ENCODE measurements at regions of chr5 and their contacts with region 1.

Region 1: GRCh38 chr5:122076664-122077365 is 1.2 kb downstream of the LOX start:
- DNase-seq: peak; percentile 76
- ATAC-seq: peak; percentile 56
- H3K4me3 ChIP-seq: peak overlapping the region; percentile 83
- H3K27ac ChIP-seq: peak overlapping the region; percentile 89
- H3K4me1 ChIP-seq: peaks cover 13% of the 10 kb centered on the region
- H3K27me3 ChIP-seq: no peaks in the 10 kb centered on the region
- CTCF ChIP-seq: peak; percentile 77
- POLR2A ChIP-seq: peak; percentile 43; the same call in 1 of the 2 replicates
- RAD21 ChIP-seq: peak; percentile 63

Region 2: DNA sequence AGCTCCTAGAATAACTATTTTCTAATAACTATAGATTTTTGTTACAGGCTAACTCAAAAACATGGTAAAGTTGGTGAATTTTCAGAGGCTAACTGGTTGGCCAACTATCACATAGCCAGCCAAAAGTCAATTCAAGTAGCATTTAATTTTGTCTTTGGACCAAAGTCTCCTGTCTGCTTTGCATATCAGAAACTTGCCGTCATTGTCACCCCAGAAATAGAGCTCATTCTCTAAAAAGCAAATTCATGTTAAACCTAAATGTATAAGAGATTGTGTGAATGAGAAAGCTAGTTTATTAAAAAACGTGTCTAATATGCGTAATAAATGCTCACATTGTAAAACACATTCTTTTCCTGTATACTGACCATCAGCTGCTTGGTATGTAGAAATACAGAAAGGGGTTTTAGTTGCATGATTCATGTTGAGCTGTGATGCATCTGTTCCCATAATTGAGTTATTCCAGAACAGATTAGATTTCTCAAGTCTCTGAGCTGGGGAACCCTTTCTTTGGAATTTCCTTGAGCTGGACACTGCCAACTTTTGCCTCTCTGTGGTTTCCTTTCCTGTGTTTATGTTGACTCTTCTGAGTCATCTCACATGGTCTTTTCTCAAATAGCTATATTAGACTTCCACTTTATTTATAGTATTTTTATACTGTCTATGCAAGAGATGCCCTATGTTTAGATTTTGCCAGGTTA is 107.8 kb before region 1 on chr5:
- CTCF ChIA-PET with region 1: interaction called, 16 read pairs
- POLR2A ChIA-PET with region 1: interaction called, 3 read pairs
- dilution Hi-C with region 1: no loop called
- in situ Hi-C with region 1: loop called (anchors 10 kb)
- intact Hi-C with region 1: loop called (anchors 1 kb)
- DNase-seq: peak; percentile 100
- ATAC-seq: peak; percentile 94
- H3K4me3 ChIP-seq: no peak overlapping the region
- H3K27ac ChIP-seq: peak overlapping the region; percentile 39; the same call in 1 of the 2 replicates
- H3K4me1 ChIP-seq: peaks cover 6% of the 10 kb centered on the region
- H3K27me3 ChIP-seq: no peaks in the 10 kb centered on the region
- CTCF ChIP-seq: no peak
- POLR2A ChIP-seq: no peak
- RAD21 ChIP-seq: no peak; the same call in 1 of the 2 replicates

Region 3: DNA sequence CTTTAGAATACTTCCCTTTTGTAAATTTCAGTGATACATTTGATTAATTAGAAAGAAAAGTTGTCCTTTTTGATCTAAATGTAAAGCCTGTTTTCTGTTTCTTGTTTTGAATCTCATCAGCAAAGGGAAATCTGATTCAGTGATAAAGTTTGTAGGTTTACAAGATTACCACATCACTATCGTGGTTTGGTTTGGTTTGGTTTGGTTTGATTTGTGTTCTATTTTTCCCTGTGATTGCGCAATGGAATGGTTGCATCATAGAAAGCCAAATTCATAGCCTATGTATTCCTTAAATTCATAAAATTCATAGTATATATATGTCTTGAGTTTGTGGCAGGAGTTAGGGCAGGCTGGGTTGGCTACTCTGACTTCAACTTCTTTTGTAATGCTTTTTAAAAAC is 99.8 kb before region 1 on chr5:
- CTCF ChIA-PET with region 1: no interaction called
- POLR2A ChIA-PET with region 1: interaction called, 3 read pairs
- dilution Hi-C with region 1: no loop called
- in situ Hi-C with region 1: loop called (anchors 10 kb)
- intact Hi-C with region 1: no loop called
- DNase-seq: peak; percentile 64
- ATAC-seq: no peak
- H3K4me3 ChIP-seq: no peak overlapping the region
- H3K27ac ChIP-seq: no peak overlapping the region
- H3K4me1 ChIP-seq: peaks cover 1% of the 10 kb centered on the region; the same call in 1 of the 2 replicates
- H3K27me3 ChIP-seq: no peaks in the 10 kb centered on the region
- CTCF ChIP-seq: no peak
- POLR2A ChIP-seq: no peak
- RAD21 ChIP-seq: no peak

Region 4: DNA sequence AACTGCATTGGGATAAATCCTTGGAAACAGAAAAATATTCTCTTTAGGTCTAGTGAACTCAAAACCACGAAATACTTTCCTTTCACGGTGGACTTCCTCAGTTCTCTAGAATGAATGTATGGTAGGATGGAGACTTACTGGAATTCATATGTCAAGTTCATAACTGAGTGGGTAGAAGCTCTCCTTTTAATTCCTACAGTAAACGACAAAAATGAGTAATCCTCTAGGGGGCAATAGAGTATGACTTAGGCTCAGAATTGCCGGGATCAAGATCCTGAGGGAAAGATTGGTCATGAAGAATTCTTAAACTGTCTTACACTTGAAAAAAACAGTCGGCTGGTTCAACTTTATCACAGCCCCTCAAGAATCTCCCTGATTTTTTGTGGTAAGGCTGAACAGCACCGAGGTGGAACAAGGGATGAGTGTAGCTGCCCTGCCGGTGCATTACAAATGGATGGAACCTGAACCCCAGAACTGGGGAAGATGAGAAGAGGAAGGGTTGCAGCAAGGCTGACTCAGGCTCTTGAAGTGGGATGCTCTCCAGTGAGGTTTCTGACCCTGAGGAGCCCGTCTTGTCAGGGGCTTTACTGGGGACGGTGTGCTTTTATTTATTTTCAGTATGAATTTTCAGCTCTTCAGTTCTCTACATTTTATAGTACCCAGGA is 15.3 kb after region 1 on chr5:
- CTCF ChIA-PET with region 1: interaction called, 9 read pairs
- POLR2A ChIA-PET with region 1: no interaction called
- dilution Hi-C with region 1: no loop called
- in situ Hi-C with region 1: no loop called
- intact Hi-C with region 1: loop called (anchors 2 kb)
- DNase-seq: peak; percentile 77
- ATAC-seq: peak; percentile 38
- H3K4me3 ChIP-seq: no peak overlapping the region
- H3K27ac ChIP-seq: peak overlapping the region; percentile 56
- H3K4me1 ChIP-seq: peaks cover 18% of the 10 kb centered on the region
- H3K27me3 ChIP-seq: no peaks in the 10 kb centered on the region
- CTCF ChIP-seq: peak; percentile 62
- POLR2A ChIP-seq: no peak
- RAD21 ChIP-seq: peak; percentile 63

Region 5: DNA sequence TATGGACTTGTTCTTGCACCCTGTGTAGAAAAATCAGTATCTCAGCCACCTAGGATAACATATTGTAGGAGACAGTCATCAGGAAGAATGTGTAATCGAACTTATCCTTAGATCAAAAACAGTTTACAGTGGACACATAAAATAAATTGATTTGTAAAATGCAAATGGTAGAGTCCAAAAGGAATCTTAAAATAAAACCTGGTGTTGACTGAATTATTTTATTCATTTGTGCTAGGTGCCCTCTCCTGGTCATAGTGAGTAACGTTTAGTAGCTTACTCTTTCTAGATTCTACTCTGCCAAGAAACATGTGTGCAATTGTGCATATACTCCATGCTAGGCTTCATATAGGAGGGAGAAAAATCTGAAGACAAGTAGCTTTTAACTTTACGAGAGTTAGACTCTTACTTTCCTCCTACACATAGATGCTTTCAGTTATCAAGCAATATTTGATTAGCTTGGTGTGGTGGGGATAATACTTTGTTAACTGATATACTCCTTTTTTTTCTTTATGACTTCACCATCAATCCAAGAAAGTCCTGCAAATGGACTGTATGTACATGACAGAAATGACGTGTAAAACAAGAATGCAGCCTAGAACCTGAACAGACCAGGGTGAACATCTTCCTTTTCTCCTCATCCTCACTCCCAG is 24.9 kb after region 1 on chr5:
- CTCF ChIA-PET with region 1: interaction called, 4 read pairs
- POLR2A ChIA-PET with region 1: interaction called, 3 read pairs
- dilution Hi-C with region 1: no loop called
- in situ Hi-C with region 1: no loop called
- intact Hi-C with region 1: loop called (anchors 1 kb)
- DNase-seq: peak; percentile 79
- ATAC-seq: peak; percentile 79
- H3K4me3 ChIP-seq: no peak overlapping the region
- H3K27ac ChIP-seq: no peak overlapping the region
- H3K4me1 ChIP-seq: peaks cover 5% of the 10 kb centered on the region
- H3K27me3 ChIP-seq: no peaks in the 10 kb centered on the region
- CTCF ChIP-seq: peak; percentile 72
- POLR2A ChIP-seq: no peak
- RAD21 ChIP-seq: peak; percentile 74

Region 6: DNA sequence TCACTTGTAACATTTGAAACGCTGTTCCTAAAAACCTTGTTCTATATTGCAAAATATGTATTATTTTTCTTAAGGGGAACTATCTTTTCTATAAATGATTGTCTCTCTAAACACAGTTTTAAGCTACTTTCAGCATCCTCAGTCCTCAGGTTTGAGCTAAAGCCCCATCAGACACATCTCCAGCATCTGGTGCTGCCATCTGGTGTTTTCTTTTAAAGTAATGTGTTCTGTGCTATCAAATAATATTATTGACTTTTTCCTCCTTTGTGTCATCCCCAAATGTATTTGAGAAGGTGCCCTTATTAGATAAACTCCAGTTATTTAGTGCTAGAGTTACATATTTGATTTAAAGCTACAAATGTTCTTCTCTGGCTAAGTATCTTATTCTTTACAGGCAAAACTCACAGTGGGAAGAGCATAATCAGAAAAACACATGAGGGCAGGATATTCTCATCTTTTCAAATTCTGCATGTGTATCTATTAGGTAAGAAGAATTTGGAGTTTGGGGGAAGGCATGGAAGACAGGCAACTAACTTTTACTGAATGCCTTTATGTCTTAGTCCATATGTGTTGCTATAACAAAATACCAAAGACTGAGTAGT is 80.0 kb after region 1 on chr5:
- CTCF ChIA-PET with region 1: interaction called, 11 read pairs
- POLR2A ChIA-PET with region 1: interaction called, 3 read pairs
- dilution Hi-C with region 1: no loop called
- in situ Hi-C with region 1: no loop called
- intact Hi-C with region 1: loop called (anchors 1 kb)
- DNase-seq: peak; percentile 78
- ATAC-seq: no peak; the same call in 1 of the 2 replicates
- H3K4me3 ChIP-seq: no peak overlapping the region
- H3K27ac ChIP-seq: no peak overlapping the region
- H3K4me1 ChIP-seq: peaks cover 27% of the 10 kb centered on the region
- H3K27me3 ChIP-seq: no peaks in the 10 kb centered on the region
- CTCF ChIP-seq: peak; percentile 66
- POLR2A ChIP-seq: no peak
- RAD21 ChIP-seq: peak; percentile 80

Region 7: GRCh38 chr5:122252319-122252718 is 175.5 kb after region 1 on chr5:
- CTCF ChIA-PET with region 1: no interaction called
- POLR2A ChIA-PET with region 1: no interaction called
- dilution Hi-C with region 1: no loop called
- in situ Hi-C with region 1: no loop called
- intact Hi-C with region 1: no loop called
- DNase-seq: peak; percentile 19
- ATAC-seq: peak; percentile 27
- H3K4me3 ChIP-seq: no peak overlapping the region
- H3K27ac ChIP-seq: no peak overlapping the region
- H3K4me1 ChIP-seq: no peaks in the 10 kb centered on the region
- H3K27me3 ChIP-seq: no peaks in the 10 kb centered on the region
- CTCF ChIP-seq: no peak
- POLR2A ChIP-seq: no peak
- RAD21 ChIP-seq: no peak

Measured in IMR-90 (cell line).